ENCODE measurements at regions of chr12 and their contacts with region 1.

Region 1: DNA sequence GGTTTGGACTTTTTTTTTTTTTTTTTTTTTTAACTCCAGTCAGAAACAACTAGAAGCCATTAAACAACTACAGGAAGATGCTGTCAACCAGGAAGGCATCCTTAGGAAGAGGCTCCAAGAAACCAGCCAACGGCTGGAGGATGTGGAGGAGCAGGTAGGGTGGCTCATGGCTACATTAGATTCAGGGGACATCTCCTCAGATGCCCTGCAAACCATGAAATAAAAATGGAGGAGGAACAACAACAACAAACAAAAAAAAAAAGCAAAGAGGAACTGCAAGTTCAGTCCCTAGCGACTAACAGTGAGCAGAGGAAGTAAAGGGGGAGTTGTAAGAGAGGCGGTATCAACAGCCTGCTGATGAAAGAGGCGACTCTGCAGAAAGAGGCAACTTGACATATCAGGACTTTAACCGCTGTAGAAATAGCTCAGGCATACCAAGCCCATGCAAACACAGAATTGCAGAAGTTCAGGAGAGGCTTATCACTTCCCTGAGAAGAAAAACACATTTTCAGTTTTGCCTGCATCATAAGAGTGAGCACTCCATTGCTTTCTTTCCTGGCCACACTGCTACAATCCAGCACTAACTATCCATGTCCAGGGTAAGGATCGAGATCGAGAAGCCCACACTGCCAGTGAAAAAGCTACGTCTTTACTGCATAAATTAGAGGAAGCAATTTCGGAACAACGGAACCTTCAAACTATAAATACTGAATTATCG is 103.5 kb upstream of the BCAT1 start:
- DNase-seq: peak; percentile 93
- ATAC-seq: peak; percentile 87
- H3K4me3 ChIP-seq: peak overlapping the region; percentile 64 to 99 (median 86)
- H3K4me3 Mint-ChIP-seq: peak overlapping the region; percentile 100
- H3K27ac ChIP-seq: peak overlapping the region; percentile 85 to 86
- H3K27ac Mint-ChIP-seq: peak overlapping the region; percentile 98
- H3K4me1 ChIP-seq: peaks cover 28% of the 10 kb centered on the region in 2 donors
- H3K4me1 Mint-ChIP-seq: peaks cover 48% of the 10 kb centered on the region
- H3K27me3 ChIP-seq: no peaks in the 10 kb centered on the region
- H3K27me3 Mint-ChIP-seq: no peaks in the 10 kb centered on the region
- CTCF ChIP-seq: no peak

Region 2: DNA sequence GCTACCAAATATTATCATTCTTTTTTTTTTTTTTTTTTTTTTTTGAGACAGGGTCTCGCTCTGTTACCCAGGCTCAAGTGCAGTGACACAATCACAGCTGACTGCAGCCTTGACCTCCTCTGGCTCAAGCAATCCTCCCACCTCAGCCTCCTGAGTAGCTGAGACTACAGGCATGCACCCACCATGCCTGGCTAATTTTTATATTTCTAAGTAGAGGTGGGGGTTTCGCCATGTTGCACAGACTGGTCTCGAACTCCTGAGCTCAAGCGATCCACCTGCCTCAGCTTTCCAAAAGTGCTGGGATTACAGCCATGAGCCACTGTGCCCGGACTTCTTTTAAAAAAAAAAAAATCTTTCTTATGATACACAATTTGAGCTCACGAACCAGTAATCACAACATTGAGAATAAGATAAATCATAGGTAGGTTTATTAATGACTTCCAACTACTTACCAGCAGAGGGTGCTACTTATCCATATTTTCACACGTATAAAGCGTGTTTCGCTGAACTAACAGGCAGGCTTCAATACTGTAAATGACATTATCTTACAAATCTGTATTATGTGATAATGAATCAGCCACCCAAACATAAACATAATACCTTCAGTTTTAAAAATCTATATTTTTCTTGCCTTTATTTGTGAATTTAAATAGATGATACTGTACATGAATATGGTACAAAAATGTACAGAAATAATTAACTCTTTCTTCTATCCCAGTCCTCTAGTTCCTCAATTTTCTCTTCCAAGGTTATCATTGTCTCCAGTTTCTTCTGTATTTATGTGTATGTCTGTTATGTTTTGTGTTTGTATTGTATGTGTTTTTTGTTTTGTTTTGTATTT is 60.9 kb before region 1 on chr12:
- CTCF ChIA-PET with region 1: interaction called, 53 read pairs
- POLR2A ChIA-PET with region 1: interaction called, 22 read pairs
- intact Hi-C with region 1: no loop called
- DNase-seq: peak; percentile 82
- ATAC-seq: peak; percentile 74
- H3K4me3 ChIP-seq: no peak overlapping the region
- H3K4me3 Mint-ChIP-seq: no peak overlapping the region
- H3K27ac ChIP-seq: no peak overlapping the region
- H3K27ac Mint-ChIP-seq: no peak overlapping the region
- H3K4me1 ChIP-seq: peaks cover 28 to 37% of the 10 kb centered on the region in 2 donors
- H3K4me1 Mint-ChIP-seq: peaks cover 35% of the 10 kb centered on the region
- H3K27me3 ChIP-seq: no peaks in the 10 kb centered on the region
- H3K27me3 Mint-ChIP-seq: no peaks in the 10 kb centered on the region
- CTCF ChIP-seq: peak; percentile 82

Region 3: GRCh38 chr12:25020621-25021243 is 31.6 kb before region 1 on chr12:
- CTCF ChIA-PET with region 1: interaction called, 13 read pairs
- POLR2A ChIA-PET with region 1: interaction called, 14 read pairs
- intact Hi-C with region 1: loop called (anchors 2 kb)
- DNase-seq: peak; percentile 67
- ATAC-seq: peak; percentile 86
- H3K4me3 ChIP-seq: peak overlapping the region in 2 of 5 experiments; percentile 8 to 37
- H3K4me3 Mint-ChIP-seq: peak overlapping the region; percentile 67
- H3K27ac ChIP-seq: peak overlapping the region; percentile 59 to 68
- H3K27ac Mint-ChIP-seq: peak overlapping the region; percentile 81
- H3K4me1 ChIP-seq: peaks cover 69 to 72% of the 10 kb centered on the region in 2 donors
- H3K4me1 Mint-ChIP-seq: peaks cover 58% of the 10 kb centered on the region
- H3K27me3 ChIP-seq: no peaks in the 10 kb centered on the region
- H3K27me3 Mint-ChIP-seq: no peaks in the 10 kb centered on the region
- CTCF ChIP-seq: no peak

Region 4: DNA sequence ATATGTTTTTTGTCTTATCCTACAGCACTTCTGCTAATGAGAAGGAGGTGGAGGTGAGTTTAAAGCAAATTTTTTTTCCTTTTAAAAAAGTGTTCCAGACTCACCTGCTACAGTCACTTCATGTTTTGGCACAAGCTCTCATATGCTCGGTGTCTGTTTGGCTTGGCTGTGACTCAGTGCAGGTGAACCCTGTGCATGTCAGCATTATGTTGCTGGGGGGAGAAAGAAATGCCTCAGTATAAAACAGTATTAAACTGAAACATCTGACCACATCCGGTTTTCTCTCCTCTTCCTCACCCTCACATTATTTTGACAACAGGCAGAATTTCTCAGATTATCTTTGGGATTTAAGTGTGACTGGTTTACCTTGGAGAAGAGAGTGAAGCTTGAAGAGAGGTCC is 37.4 kb after region 1 on chr12:
- CTCF ChIA-PET with region 1: no interaction called
- POLR2A ChIA-PET with region 1: no interaction called
- intact Hi-C with region 1: loop called (anchors 5 kb)
- DNase-seq: no peak
- ATAC-seq: no peak
- H3K4me3 ChIP-seq: no peak overlapping the region
- H3K4me3 Mint-ChIP-seq: no peak overlapping the region
- H3K27ac ChIP-seq: peak overlapping the region; percentile 36 to 61
- H3K27ac Mint-ChIP-seq: peak overlapping the region; percentile 71
- H3K4me1 ChIP-seq: peaks cover 5 to 15% of the 10 kb centered on the region in 2 donors
- H3K4me1 Mint-ChIP-seq: peaks cover 60% of the 10 kb centered on the region
- H3K27me3 ChIP-seq: no peaks in the 10 kb centered on the region
- H3K27me3 Mint-ChIP-seq: no peaks in the 10 kb centered on the region
- CTCF ChIP-seq: no peak

Region 5: DNA sequence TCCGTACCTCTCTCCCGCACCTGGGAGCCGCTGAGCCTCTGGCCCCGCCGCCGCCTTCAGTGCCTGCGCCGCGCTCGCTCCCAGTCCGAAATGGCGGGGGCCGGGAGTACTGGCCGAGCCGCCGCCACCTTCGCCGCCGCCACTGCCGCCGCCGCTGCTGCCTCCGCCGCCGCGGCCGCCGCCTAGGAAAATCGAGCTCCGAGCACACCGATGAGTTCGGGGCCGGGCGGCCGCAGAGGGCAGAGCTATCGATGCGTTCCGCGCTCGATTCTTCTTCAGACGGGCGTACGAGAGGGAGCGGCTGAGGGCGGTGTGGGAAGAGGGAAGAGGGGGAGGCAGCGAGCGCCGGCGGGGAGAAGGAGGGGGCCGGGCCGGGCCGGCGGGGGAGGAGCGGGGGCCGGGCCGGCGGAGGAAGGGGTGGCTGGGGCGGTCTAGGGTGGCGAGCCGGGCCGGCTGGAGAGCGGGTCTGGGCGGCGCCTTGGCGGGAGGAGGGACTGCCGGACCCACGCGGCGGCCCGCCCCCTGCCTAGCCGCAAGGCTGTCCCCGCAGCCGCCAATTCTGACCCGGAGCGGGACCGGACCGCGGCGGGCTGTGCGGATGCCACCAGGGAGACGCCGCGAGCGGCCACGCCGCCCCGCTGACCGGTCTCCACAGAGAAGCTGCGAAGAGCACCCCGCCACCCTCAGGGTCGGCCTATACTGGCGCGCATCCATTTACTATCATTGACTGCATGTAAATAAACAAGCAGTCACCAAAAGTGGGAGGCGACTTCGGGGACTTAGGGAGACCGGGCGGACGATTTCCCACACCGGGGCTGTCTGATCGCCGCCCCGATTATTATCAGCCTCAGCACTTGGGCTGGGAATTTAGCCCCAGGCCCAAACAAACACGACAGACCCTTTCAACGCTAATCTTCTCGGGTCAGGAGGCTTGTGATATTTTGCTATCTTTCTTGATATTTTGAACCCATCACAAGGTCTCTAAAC is 198.7 kb after region 1 on chr12 and contains the start of gene KRAS:
- CTCF ChIA-PET with region 1: no interaction called
- POLR2A ChIA-PET with region 1: no interaction called
- intact Hi-C with region 1: loop called (anchors 2 kb)
- DNase-seq: peak; percentile 96
- ATAC-seq: peak; percentile 80
- H3K4me3 ChIP-seq: peak within 1 kb of the TSS; percentile 59 to 94 (median 74)
- H3K4me3 Mint-ChIP-seq: peak within 1 kb of the TSS; percentile 96
- H3K27ac ChIP-seq: peak within 1 kb of the TSS; percentile 61 to 89
- H3K27ac Mint-ChIP-seq: peak within 1 kb of the TSS; percentile 99
- H3K4me1 ChIP-seq: peaks cover 25 to 42% of the 10 kb centered on the region in 2 donors
- H3K4me1 Mint-ChIP-seq: peaks cover 48% of the 10 kb centered on the region
- H3K27me3 ChIP-seq: no peaks in the 10 kb centered on the region
- H3K27me3 Mint-ChIP-seq: no peaks in the 10 kb centered on the region
- CTCF ChIP-seq: no peak
- total RNA-seq, gene KRAS: 40.7 and 41.8 TPM in 2 replicates

Region 6: GRCh38 chr12:25501522-25501921 is 449.2 kb after region 1 on chr12:
- CTCF ChIA-PET with region 1: no interaction called
- POLR2A ChIA-PET with region 1: no interaction called
- intact Hi-C with region 1: no loop called
- DNase-seq: no peak
- ATAC-seq: no peak
- H3K4me3 ChIP-seq: no peak overlapping the region
- H3K4me3 Mint-ChIP-seq: no peak overlapping the region
- H3K27ac ChIP-seq: no peak overlapping the region
- H3K27ac Mint-ChIP-seq: no peak overlapping the region
- H3K4me1 ChIP-seq: no peaks in the 10 kb centered on the region
- H3K4me1 Mint-ChIP-seq: no peaks in the 10 kb centered on the region
- H3K27me3 ChIP-seq: peaks cover 0 to 2% (median 0%) of the 10 kb centered on the region in 4 experiments
- H3K27me3 Mint-ChIP-seq: peaks cover 13% of the 10 kb centered on the region
- CTCF ChIP-seq: no peak

Region 7: GRCh38 chr12:26839512-26839911 is 1787.2 kb after region 1 on chr12:
- CTCF ChIA-PET with region 1: no interaction called
- POLR2A ChIA-PET with region 1: interaction called, 10 read pairs
- intact Hi-C with region 1: no loop called
- DNase-seq: no peak
- ATAC-seq: no peak
- H3K4me3 ChIP-seq: no peak overlapping the region
- H3K4me3 Mint-ChIP-seq: no peak overlapping the region
- H3K27ac ChIP-seq: no peak overlapping the region
- H3K27ac Mint-ChIP-seq: no peak overlapping the region
- H3K4me1 ChIP-seq: no peaks in the 10 kb centered on the region
- H3K4me1 Mint-ChIP-seq: peaks cover 9% of the 10 kb centered on the region
- H3K27me3 ChIP-seq: no peaks in the 10 kb centered on the region
- H3K27me3 Mint-ChIP-seq: no peaks in the 10 kb centered on the region
- CTCF ChIP-seq: no peak